ENCODE measurements at regions of chr2 and their contacts with region 1.

Region 1: GRCh38 chr2:195656859-195657633 is at the start of gene SLC39A10:
- DNase-seq: peak; percentile 95
- H3K4me3 ChIP-seq: peak within 1 kb of the TSS; percentile 91
- H3K4me1 ChIP-seq: peaks cover 17% of the 10 kb centered on the region
- H3K27me3 ChIP-seq: no peaks in the 10 kb centered on the region

Region 2: GRCh38 chr2:196068271-196069209 is 411.5 kb after region 1 on chr2 and contains the start of gene DNAH7:
- in situ Hi-C with region 1: loop called (anchors 10 kb)
- DNase-seq: peak; percentile 70 to 91
- H3K4me3 ChIP-seq: peak within 1 kb of the TSS; percentile 52
- H3K4me1 ChIP-seq: peaks cover 11% of the 10 kb centered on the region
- H3K27me3 ChIP-seq: no peaks in the 10 kb centered on the region